Mammary epithelial cell (primary cell): ENCODE measurements at regions of chr3 and their contacts with region 1.

Region 1: GRCh38 chr3:151146071-151146730 is 56.8 kb downstream of the GPR171 start:
- DNase-seq: peak; percentile 61
- H3K4me3 ChIP-seq: no peak overlapping the region
- H3K27ac ChIP-seq: no peak overlapping the region
- H3K4me1 ChIP-seq: peaks cover 11% of the 10 kb centered on the region
- H3K27me3 ChIP-seq: peaks cover 4% of the 10 kb centered on the region
- CTCF ChIP-seq: peak; percentile 89 to 93

Region 2: GRCh38 chr3:150528354-150528797 is 617.8 kb before region 1 on chr3:
- CTCF ChIA-PET with region 1: no interaction called
- dilution Hi-C with region 1: no loop called
- in situ Hi-C with region 1: no loop called
- intact Hi-C with region 1: loop called (anchors 2 kb)
- DNase-seq: no peak
- H3K4me3 ChIP-seq: no peak overlapping the region
- H3K27ac ChIP-seq: no peak overlapping the region
- H3K4me1 ChIP-seq: no peaks in the 10 kb centered on the region
- H3K27me3 ChIP-seq: no peaks in the 10 kb centered on the region
- CTCF ChIP-seq: peak in 1 of 2 donors; percentile 30

Region 3: DNA sequence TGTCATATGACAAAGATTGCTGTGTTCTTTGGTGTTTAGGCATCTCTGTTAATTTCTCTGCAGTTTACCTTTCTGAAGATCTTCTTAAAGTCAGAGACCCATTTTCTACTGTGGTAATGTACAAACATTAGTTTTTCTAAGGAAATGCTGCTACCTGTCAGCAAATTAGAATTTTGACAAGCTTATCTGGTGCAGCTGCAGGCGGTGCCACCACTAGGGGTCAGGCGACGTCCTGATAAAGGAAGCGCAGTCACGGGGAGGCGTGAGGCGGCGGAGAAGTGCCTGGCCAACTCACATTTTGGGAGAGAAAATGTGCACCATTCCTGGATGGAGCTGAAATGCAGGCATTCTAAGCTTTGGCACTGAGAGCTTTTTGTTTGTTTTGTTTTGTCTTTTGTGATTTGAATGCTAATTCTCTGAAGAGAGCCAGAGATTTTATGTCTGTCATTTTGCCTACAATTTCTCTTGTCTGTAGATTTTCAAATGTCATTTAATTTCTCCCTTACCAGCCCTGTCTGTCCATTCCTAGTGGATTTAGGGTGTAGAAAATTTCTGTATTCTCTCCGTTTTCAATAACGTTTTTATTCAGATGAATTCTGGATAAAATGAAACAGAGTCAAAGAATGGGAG is 358.3 kb before region 1 on chr3:
- CTCF ChIA-PET with region 1: no interaction called
- dilution Hi-C with region 1: no loop called
- in situ Hi-C with region 1: loop called in 1 of 2 experiments (anchors 25 kb)
- intact Hi-C with region 1: loop called (anchors 1 kb)
- DNase-seq: peak; percentile 50
- H3K4me3 ChIP-seq: no peak overlapping the region
- H3K27ac ChIP-seq: no peak overlapping the region
- H3K4me1 ChIP-seq: peaks cover 6% of the 10 kb centered on the region
- H3K27me3 ChIP-seq: no peaks in the 10 kb centered on the region
- CTCF ChIP-seq: peak; percentile 90 to 99

Region 4: DNA sequence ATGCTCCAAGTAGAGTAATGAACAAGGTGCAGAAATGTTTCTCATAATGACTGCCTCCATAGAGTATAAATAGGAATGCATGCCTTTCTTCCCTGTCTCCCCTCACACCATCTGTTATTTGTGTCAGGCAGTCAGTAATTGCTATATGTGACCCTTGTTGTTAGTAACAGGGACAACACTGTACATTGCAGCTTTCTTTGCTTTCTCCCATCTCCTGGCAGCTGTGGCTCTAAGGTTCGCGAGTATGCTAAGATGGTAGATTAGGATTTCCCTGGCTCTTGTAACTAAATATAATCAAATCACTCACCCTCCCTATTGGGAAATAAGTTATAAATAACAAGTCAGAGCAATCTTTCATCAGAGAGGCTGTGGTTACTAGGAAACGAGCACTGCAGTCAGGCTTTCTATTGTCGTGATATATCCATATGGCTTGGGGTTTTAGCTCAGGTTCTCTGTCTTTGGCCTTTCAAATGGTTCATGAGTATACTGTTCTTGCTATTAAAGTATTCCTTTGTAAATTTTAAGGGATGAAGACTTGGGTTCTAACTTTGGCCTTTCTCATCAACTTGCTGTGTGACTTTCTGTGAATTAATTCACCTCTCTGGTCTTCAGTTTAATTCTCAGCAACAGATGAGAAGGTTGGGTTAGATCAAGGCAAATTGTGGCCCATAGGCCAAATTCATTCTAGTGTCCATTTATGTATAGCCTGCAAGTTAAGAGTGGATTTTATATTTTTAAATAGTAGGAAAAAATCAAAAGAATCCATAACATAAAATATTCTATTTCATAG is 232.9 kb before region 1 on chr3:
- CTCF ChIA-PET with region 1: no interaction called
- dilution Hi-C with region 1: no loop called
- in situ Hi-C with region 1: loop called in 1 of 2 experiments (anchors 25 kb)
- intact Hi-C with region 1: no loop called
- DNase-seq: no peak
- H3K4me3 ChIP-seq: no peak overlapping the region
- H3K27ac ChIP-seq: no peak overlapping the region
- H3K4me1 ChIP-seq: no peaks in the 10 kb centered on the region
- H3K27me3 ChIP-seq: no peaks in the 10 kb centered on the region
- CTCF ChIP-seq: no peak

Region 5: GRCh38 chr3:151008699-151009098 is 137.5 kb before region 1 on chr3:
- CTCF ChIA-PET with region 1: no interaction called
- dilution Hi-C with region 1: no loop called
- in situ Hi-C with region 1: no loop called
- intact Hi-C with region 1: loop called (anchors 1 kb)
- DNase-seq: peak; percentile 11
- H3K4me3 ChIP-seq: no peak overlapping the region
- H3K27ac ChIP-seq: no peak overlapping the region
- H3K4me1 ChIP-seq: no peaks in the 10 kb centered on the region
- H3K27me3 ChIP-seq: peaks cover 2% of the 10 kb centered on the region
- CTCF ChIP-seq: peak in 1 of 2 donors; percentile 37

Region 6: GRCh38 chr3:151086484-151087456 is 59.4 kb before region 1 on chr3:
- CTCF ChIA-PET with region 1: no interaction called
- dilution Hi-C with region 1: no loop called
- in situ Hi-C with region 1: no loop called
- intact Hi-C with region 1: loop called (anchors 1 kb)
- DNase-seq: peak; percentile 71
- H3K4me3 ChIP-seq: peak overlapping the region; percentile 21 to 49 (median 40)
- H3K27ac ChIP-seq: no peak overlapping the region
- H3K4me1 ChIP-seq: peaks cover 13% of the 10 kb centered on the region
- H3K27me3 ChIP-seq: peaks cover 33% of the 10 kb centered on the region
- CTCF ChIP-seq: peak; percentile 17 to 66

Region 7: DNA sequence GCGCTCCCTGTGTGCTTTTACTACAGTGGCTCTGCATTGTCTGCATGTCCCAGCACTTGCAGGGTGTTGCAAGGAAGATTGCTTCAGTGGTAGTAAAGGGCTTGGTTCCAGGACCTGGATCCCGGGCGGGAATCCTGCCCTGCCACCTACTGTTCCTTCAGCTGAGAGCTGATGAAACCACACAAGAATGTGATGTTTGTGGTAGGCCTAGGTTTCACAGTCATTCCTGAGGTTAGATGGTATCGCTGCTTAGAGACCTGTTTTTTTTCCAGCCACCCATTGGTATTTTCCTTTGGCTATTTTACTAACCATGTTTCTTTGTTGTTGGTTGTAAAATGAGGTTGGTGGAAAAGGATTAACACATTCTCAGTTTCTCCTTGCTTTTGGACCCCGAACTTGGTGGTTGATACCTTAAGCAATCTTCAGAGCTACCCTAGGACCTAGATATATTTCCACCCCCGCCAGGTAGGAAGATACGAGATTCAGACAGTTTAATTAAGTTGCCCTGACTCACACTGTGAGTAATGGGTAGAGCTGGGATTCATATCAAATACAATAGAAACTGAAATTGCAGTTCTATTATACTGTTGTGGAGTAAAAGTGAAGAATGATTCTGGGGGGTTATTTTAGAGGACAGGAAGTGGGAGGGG is 159.0 kb after region 1 on chr3:
- CTCF ChIA-PET with region 1: no interaction called
- dilution Hi-C with region 1: no loop called
- in situ Hi-C with region 1: no loop called
- intact Hi-C with region 1: no loop called
- DNase-seq: peak; percentile 99
- H3K4me3 ChIP-seq: peak overlapping the region; percentile 10 to 23 (median 20)
- H3K27ac ChIP-seq: peak overlapping the region; percentile 97
- H3K4me1 ChIP-seq: peaks cover 88% of the 10 kb centered on the region
- H3K27me3 ChIP-seq: no peaks in the 10 kb centered on the region
- CTCF ChIP-seq: peak in 1 of 2 donors; percentile 36